MCF 10A (cell line): ENCODE measurements at regions of chr1 and their contacts with region 1.

Region 1: GRCh38 chr1:207868774-207869721 is 41.9 kb downstream of the CD34 start:
- DNase-seq: peak; percentile 89
- H3K4me3 Mint-ChIP-seq: peak overlapping the region; percentile 84
- H3K27ac Mint-ChIP-seq: peak overlapping the region; percentile 32
- H3K4me1 Mint-ChIP-seq: peaks cover 29% of the 10 kb centered on the region
- H3K27me3 Mint-ChIP-seq: no peaks in the 10 kb centered on the region
- CTCF ChIP-seq: peak; percentile 99

Region 2: GRCh38 chr1:207805841-207806421 is 63.1 kb before region 1 on chr1:
- CTCF ChIA-PET with region 1: interaction called, 38 read pairs
- POLR2A ChIA-PET with region 1: interaction called, 30 read pairs
- intact Hi-C with region 1: no loop called
- DNase-seq: peak; percentile 100
- H3K4me3 Mint-ChIP-seq: peak overlapping the region; percentile 21
- H3K27ac Mint-ChIP-seq: peak overlapping the region; percentile 95
- H3K4me1 Mint-ChIP-seq: peaks cover 58% of the 10 kb centered on the region
- H3K27me3 Mint-ChIP-seq: no peaks in the 10 kb centered on the region
- CTCF ChIP-seq: no peak

Region 3: DNA sequence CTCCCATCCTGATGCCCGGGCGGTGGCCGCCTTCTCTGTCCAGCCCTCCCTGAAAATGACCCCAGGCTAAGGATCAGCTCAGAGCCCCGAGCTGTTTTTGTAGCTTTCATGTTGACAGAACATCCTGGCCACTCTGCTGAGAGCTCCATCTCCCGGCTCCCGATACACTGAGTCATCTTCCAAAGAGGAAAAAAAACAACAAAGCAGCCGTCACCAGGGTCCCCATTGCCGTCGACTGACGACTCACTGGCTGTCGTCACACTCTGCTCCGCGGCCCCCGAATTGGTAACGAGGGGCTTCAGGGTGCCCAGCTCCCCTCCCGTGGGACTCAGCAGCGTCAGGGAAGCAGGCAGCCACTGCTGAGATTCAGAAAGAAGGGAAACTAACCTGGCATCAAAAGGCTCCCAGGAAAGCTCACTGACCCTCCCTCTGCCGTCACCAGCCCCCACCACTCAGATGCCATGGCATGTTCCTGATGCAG is 50.0 kb before region 1 on chr1:
- CTCF ChIA-PET with region 1: interaction called, 790 read pairs
- POLR2A ChIA-PET with region 1: interaction called, 372 read pairs
- intact Hi-C with region 1: no loop called
- DNase-seq: peak; percentile 78
- H3K4me3 Mint-ChIP-seq: peak overlapping the region; percentile 53
- H3K27ac Mint-ChIP-seq: peak overlapping the region; percentile 81
- H3K4me1 Mint-ChIP-seq: peaks cover 81% of the 10 kb centered on the region
- H3K27me3 Mint-ChIP-seq: no peaks in the 10 kb centered on the region
- CTCF ChIP-seq: no peak

Region 4: GRCh38 chr1:207838156-207839082 is 30.6 kb before region 1 on chr1:
- CTCF ChIA-PET with region 1: interaction called, 790 read pairs
- POLR2A ChIA-PET with region 1: interaction called, 33 read pairs
- intact Hi-C with region 1: no loop called
- DNase-seq: no peak
- H3K4me3 Mint-ChIP-seq: no peak overlapping the region
- H3K27ac Mint-ChIP-seq: peak overlapping the region; percentile 32
- H3K4me1 Mint-ChIP-seq: peaks cover 34% of the 10 kb centered on the region
- H3K27me3 Mint-ChIP-seq: no peaks in the 10 kb centered on the region
- CTCF ChIP-seq: no peak

Region 5: DNA sequence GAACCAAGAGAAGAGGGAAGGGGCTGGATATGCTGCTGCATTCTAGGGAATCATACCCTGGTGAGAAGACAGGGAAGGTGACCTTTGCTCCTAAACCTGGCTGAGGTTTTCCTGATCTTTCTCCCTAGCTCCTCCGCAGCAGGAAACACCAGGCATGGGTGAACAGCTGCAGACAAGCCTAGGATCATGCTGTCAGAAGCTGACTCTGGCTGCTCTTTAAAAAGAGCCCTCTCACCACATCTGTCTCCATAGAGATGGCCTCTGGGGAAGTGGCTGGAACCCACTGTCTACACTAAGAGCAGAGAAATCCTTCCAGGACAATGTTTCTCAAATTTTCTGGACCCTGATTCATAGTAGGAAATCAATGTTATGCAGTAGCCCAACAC is 15.7 kb before region 1 on chr1:
- CTCF ChIA-PET with region 1: interaction called, 46 read pairs
- POLR2A ChIA-PET with region 1: interaction called, 110 read pairs
- intact Hi-C with region 1: loop called (anchors 1 kb)
- DNase-seq: no peak
- H3K4me3 Mint-ChIP-seq: no peak overlapping the region
- H3K27ac Mint-ChIP-seq: no peak overlapping the region
- H3K4me1 Mint-ChIP-seq: peaks cover 31% of the 10 kb centered on the region
- H3K27me3 Mint-ChIP-seq: no peaks in the 10 kb centered on the region
- CTCF ChIP-seq: no peak

Region 6: DNA sequence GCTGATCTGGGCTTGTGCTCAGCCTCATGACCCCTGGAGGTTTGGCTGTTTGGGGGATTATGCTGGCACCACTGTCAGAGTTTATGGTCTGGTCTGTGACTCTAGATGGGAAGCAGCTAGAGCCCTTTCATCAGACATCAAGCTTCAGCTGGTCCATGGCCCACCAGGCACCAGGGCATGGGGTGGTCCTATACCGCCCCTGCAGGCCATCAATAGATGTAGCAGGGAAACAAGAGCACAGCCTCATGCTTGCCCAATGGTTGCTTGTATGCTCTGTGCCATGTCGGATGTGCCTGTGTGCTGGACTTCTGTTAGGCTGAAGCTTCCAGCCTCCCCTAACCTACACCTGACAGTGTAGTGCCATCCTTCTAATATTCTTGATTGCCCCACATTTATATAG is 112.9 kb after region 1 on chr1:
- CTCF ChIA-PET with region 1: no interaction called
- POLR2A ChIA-PET with region 1: no interaction called
- intact Hi-C with region 1: no loop called
- DNase-seq: peak; percentile 47
- H3K4me3 Mint-ChIP-seq: no peak overlapping the region
- H3K27ac Mint-ChIP-seq: no peak overlapping the region
- H3K4me1 Mint-ChIP-seq: no peaks in the 10 kb centered on the region
- H3K27me3 Mint-ChIP-seq: peaks cover 44% of the 10 kb centered on the region
- CTCF ChIP-seq: peak; percentile 40